ENCODE measurements at regions of chr10 and their contacts with region 1.

Region 1: GRCh38 chr10:122565728-122566206 is 5.2 kb downstream of the DMBT1 start:
- DNase-seq: peak; percentile 24 to 61 (median 52)
- ATAC-seq: peak; percentile 48
- H3K4me3 ChIP-seq: no peak overlapping the region
- H3K4me3 Mint-ChIP-seq: no peak overlapping the region
- H3K27ac ChIP-seq: no peak overlapping the region
- H3K27ac Mint-ChIP-seq: no peak overlapping the region
- H3K4me1 ChIP-seq: no peaks in the 10 kb centered on the region
- H3K4me1 Mint-ChIP-seq: peaks cover 0 to 17% (median 8%) of the 10 kb centered on the region in 7 donors
- H3K27me3 ChIP-seq: peaks cover 0 to 3% of the 10 kb centered on the region in 2 donors
- H3K27me3 Mint-ChIP-seq: peaks cover 16 to 35% (median 27%) of the 10 kb centered on the region in 5 donors

Region 2: GRCh38 chr10:122267849-122268737 is 297.7 kb before region 1 on chr10:
- CTCF ChIA-PET with region 1: no interaction called
- POLR2A ChIA-PET with region 1: no interaction called
- intact Hi-C with region 1: loop called in 1 of 2 experiments (anchors 1 kb)
- DNase-seq: peak in 5 of 9 donors; percentile 15 to 52 (median 22)
- ATAC-seq: peak; percentile 78
- H3K4me3 ChIP-seq: no peak overlapping the region
- H3K4me3 Mint-ChIP-seq: no peak overlapping the region
- H3K27ac ChIP-seq: no peak overlapping the region
- H3K27ac Mint-ChIP-seq: no peak overlapping the region
- H3K4me1 ChIP-seq: no peaks in the 10 kb centered on the region
- H3K4me1 Mint-ChIP-seq: peaks cover 0 to 4% (median 0%) of the 10 kb centered on the region in 7 donors
- H3K27me3 ChIP-seq: no peaks in the 10 kb centered on the region
- H3K27me3 Mint-ChIP-seq: peaks cover 0 to 38% (median 33%) of the 10 kb centered on the region in 5 donors

Region 3: GRCh38 chr10:122342293-122343134 is 223.3 kb before region 1 on chr10:
- CTCF ChIA-PET with region 1: interaction called, 22 read pairs
- POLR2A ChIA-PET with region 1: no interaction called
- intact Hi-C with region 1: loop called (anchors 1 to 2 kb)
- DNase-seq: peak in 8 of 9 donors; percentile 33 to 78 (median 66)
- ATAC-seq: peak; percentile 80
- H3K4me3 ChIP-seq: no peak overlapping the region
- H3K4me3 Mint-ChIP-seq: peak overlapping the region in 1 of 10 donors; percentile 57
- H3K27ac ChIP-seq: no peak overlapping the region
- H3K27ac Mint-ChIP-seq: peak overlapping the region in 4 of 9 donors; percentile 12 to 75 (median 42)
- H3K4me1 ChIP-seq: no peaks in the 10 kb centered on the region
- H3K4me1 Mint-ChIP-seq: peaks cover 0 to 8% (median 6%) of the 10 kb centered on the region in 7 donors
- H3K27me3 ChIP-seq: no peaks in the 10 kb centered on the region
- H3K27me3 Mint-ChIP-seq: peaks cover 0 to 7% (median 0%) of the 10 kb centered on the region in 5 donors

Region 4: DNA sequence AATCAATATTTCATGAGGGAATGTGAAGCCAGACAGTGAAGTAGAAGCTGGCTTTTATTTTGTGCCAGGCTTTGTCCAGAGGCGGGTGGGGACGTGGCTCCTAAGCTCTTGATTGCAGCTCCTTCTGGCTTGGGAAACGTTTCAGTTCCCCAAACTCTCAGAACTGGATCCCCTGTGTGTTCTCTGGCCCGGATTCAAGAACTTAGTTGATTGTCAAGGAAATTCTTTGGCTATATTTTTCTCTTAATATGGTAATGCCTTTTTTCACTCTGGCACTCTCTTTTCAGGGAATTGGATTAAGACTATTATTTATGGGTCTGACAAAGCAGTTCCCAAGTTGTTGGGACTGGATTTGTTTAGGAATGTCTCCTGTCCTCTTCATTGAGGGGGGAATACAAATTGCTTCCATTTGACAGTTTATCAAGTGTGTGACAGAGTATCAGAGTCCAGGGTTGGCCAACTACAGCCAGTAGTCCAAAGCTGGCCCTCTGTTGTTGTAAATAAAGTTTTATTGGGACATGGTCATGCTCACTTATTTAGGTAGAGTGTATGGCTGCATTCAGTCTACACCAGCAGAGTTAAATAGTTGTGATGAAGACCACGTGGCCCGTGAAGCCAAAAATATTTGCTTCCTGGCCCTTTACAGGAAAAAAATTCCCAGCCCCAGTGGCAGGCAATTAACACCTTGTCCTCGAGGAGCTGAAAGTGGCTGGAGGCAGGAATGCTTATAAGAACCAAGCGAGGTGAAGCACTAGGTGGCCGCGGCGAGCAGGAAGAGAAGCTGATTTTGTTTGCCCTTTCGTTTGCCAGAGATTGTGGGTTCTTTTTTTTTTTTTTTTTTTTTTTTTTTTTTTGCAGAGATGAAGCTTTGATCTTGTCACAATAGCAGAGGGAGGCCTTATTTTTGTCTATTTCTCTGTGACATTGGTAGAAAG is 70.1 kb before region 1 on chr10:
- CTCF ChIA-PET with region 1: interaction called, 6 read pairs
- POLR2A ChIA-PET with region 1: no interaction called
- intact Hi-C with region 1: loop called in 1 of 2 experiments (anchors 1 kb)
- DNase-seq: peak in 1 of 9 donors; percentile 6
- ATAC-seq: no peak
- H3K4me3 ChIP-seq: no peak overlapping the region
- H3K4me3 Mint-ChIP-seq: peak overlapping the region in 6 of 10 donors; percentile 13 to 67 (median 60)
- H3K27ac ChIP-seq: no peak overlapping the region
- H3K27ac Mint-ChIP-seq: peak overlapping the region in 2 of 9 donors; percentile 21 to 71
- H3K4me1 ChIP-seq: peaks cover 0 to 15% of the 10 kb centered on the region in 2 donors
- H3K4me1 Mint-ChIP-seq: peaks cover 4 to 16% (median 11%) of the 10 kb centered on the region in 7 donors
- H3K27me3 ChIP-seq: no peaks in the 10 kb centered on the region
- H3K27me3 Mint-ChIP-seq: peaks cover 0 to 19% (median 4%) of the 10 kb centered on the region in 5 donors

Region 5: GRCh38 chr10:122525788-122526187 is 40.0 kb before region 1 on chr10:
- CTCF ChIA-PET with region 1: interaction called, 4 read pairs
- POLR2A ChIA-PET with region 1: no interaction called
- intact Hi-C with region 1: loop called in 1 of 2 experiments (anchors 1 kb)
- DNase-seq: no peak
- ATAC-seq: no peak
- H3K4me3 ChIP-seq: no peak overlapping the region
- H3K4me3 Mint-ChIP-seq: no peak overlapping the region
- H3K27ac ChIP-seq: no peak overlapping the region
- H3K27ac Mint-ChIP-seq: no peak overlapping the region
- H3K4me1 ChIP-seq: no peaks in the 10 kb centered on the region
- H3K4me1 Mint-ChIP-seq: no peaks in the 10 kb centered on the region
- H3K27me3 ChIP-seq: no peaks in the 10 kb centered on the region
- H3K27me3 Mint-ChIP-seq: peaks cover 3 to 13% (median 11%) of the 10 kb centered on the region in 5 donors

Region 6: GRCh38 chr10:123559066-123559822 is 993.5 kb after region 1 on chr10:
- CTCF ChIA-PET with region 1: no interaction called
- POLR2A ChIA-PET with region 1: no interaction called
- intact Hi-C with region 1: loop called (anchors 2 to 5 kb)
- DNase-seq: peak; percentile 31 to 76 (median 49)
- ATAC-seq: peak; percentile 78
- H3K4me3 ChIP-seq: no peak overlapping the region
- H3K4me3 Mint-ChIP-seq: no peak overlapping the region
- H3K27ac ChIP-seq: no peak overlapping the region
- H3K27ac Mint-ChIP-seq: peak overlapping the region in 1 of 9 donors; percentile 20
- H3K4me1 ChIP-seq: no peaks in the 10 kb centered on the region
- H3K4me1 Mint-ChIP-seq: peaks cover 0 to 6% (median 0%) of the 10 kb centered on the region in 7 donors
- H3K27me3 ChIP-seq: no peaks in the 10 kb centered on the region
- H3K27me3 Mint-ChIP-seq: peaks cover 3 to 23% (median 20%) of the 10 kb centered on the region in 5 donors